A549 (cell line): ENCODE measurements at regions of chr9 and their contacts with region 1.

Region 1: DNA sequence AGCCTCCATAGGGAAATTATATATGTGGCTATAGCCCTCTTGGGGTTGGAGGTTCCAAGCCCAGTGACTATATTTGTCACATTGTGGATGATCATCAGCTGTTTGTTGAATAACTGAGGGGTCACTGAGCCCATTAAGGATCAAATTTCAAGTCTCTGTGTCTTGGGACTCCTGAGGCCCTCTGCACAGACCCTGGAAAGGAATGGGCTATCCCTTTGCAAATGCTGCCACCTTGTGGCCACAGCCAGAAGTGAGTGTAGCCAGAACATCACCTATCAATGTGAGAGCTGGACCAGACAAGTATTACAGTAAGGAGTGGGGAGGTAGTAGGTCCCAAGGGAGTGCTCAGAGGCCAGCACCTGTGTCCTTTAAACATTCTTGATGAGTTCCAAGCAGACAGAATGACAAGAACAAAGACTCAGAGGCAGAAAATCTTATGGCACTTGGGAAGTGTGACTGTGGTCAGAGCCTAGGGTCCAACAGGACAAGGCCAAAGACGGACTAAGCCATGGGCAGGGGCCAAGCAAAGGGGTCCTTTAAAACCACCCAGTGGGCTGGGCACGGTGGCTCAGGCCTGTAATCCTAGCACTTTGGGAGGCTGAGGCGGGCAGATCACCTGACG is 8.2 kb downstream of the RPP25L start:
- DNase-seq: peak; percentile 71 to 94
- ATAC-seq: peak; percentile 82 to 96
- H3K4me3 ChIP-seq: no peak overlapping the region
- H3K27ac ChIP-seq: no peak overlapping the region
- H3K4me1 ChIP-seq: peaks cover 5% of the 10 kb centered on the region; the same call in 1 of the 3 replicates
- CTCF ChIP-seq: peak; percentile 95
- EP300 ChIP-seq: no peak
- POLR2A ChIP-seq: no peak
- RAD21 ChIP-seq: peak; percentile 88 to 96

Region 2: DNA sequence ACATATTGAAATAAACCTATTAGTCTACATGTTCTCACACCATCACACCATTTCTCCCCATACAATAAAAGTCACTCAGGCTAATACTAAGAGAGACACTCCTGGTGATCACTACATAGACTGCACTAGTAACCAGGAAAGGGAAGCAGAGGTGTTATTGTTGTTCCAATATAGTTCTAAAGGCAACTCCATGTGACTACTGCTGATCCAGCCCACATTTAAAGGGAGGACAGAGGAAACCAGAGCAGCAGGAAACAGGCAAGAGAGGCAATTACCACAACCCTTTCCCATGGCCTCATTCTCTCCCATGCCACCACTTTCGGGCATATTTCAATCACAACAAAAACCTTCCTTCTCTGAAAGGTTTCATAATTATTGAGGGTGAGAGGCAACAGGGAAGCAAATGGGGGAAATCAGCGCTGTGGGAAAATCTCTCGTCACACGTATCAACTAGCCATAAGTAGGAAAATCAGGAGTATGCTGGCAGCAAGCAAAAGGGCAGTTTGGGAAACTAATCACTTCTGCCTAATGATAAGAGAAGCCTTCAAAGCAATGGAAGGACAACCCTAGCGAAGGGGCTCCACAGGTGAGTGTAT is 556.8 kb before region 1 on chr9:
- CTCF ChIA-PET with region 1: no interaction called
- POLR2A ChIA-PET with region 1: no interaction called
- DNase-seq: no peak
- ATAC-seq: no peak
- H3K4me3 ChIP-seq: peak overlapping the region; percentile 76; the same call in 2 of the 3 replicates
- H3K27ac ChIP-seq: peak overlapping the region in 1 of 2 experiments; percentile 97; a peak in 2 of 6 replicates
- H3K4me1 ChIP-seq: peaks cover 29% of the 10 kb centered on the region
- CTCF ChIP-seq: no peak
- EP300 ChIP-seq: no peak
- POLR2A ChIP-seq: no peak
- RAD21 ChIP-seq: no peak

Region 3: GRCh38 chr9:34328987-34329832 is 274.5 kb before region 1 on chr9 and contains the starts of genes KIF24 and NUDT2:
- CTCF ChIA-PET with region 1: interaction called, 15 read pairs
- POLR2A ChIA-PET with region 1: no interaction called
- DNase-seq: peak; percentile 96 to 100
- ATAC-seq: peak; percentile 94 to 97
- H3K4me3 ChIP-seq: peak within 1 kb of the TSS; percentile 97
- H3K27ac ChIP-seq: peak within 1 kb of the TSS; percentile 92 to 95
- H3K4me1 ChIP-seq: peaks cover 20% of the 10 kb centered on the region
- CTCF ChIP-seq: no peak
- EP300 ChIP-seq: no peak
- POLR2A ChIP-seq: peak; percentile 77
- RAD21 ChIP-seq: no peak
- polyA plus RNA-seq, gene KIF24: 4.3 and 4.4 TPM in 2 replicates
- polyA plus RNA-seq, gene NUDT2: 26.4 and 26.8 TPM in 2 replicates

Region 4: GRCh38 chr9:34430843-34431437 is 172.8 kb before region 1 on chr9:
- CTCF ChIA-PET with region 1: interaction called, 152 read pairs
- POLR2A ChIA-PET with region 1: no interaction called
- DNase-seq: peak; percentile 8 to 49
- ATAC-seq: peak; percentile 63 to 68; a peak in 5 of 6 replicates
- H3K4me3 ChIP-seq: no peak overlapping the region
- H3K27ac ChIP-seq: no peak overlapping the region
- H3K4me1 ChIP-seq: no peaks in the 10 kb centered on the region
- CTCF ChIP-seq: no peak
- EP300 ChIP-seq: no peak
- POLR2A ChIP-seq: no peak
- RAD21 ChIP-seq: no peak

Region 5: GRCh38 chr9:34522971-34523797 is 80.5 kb before region 1 on chr9 and contains the start of gene ENHO:
- CTCF ChIA-PET with region 1: interaction called, 12 read pairs
- POLR2A ChIA-PET with region 1: no interaction called
- DNase-seq: peak; percentile 83 to 94
- ATAC-seq: peak; percentile 92 to 99
- H3K4me3 ChIP-seq: peak within 1 kb of the TSS; percentile 58
- H3K27ac ChIP-seq: peak within 1 kb of the TSS; percentile 70 to 85
- H3K4me1 ChIP-seq: peaks cover 8% of the 10 kb centered on the region; the same call in 2 of the 3 replicates
- CTCF ChIP-seq: no peak
- EP300 ChIP-seq: no peak
- POLR2A ChIP-seq: peak; percentile 20; the same call in 1 of the 2 replicates
- RAD21 ChIP-seq: no peak
- polyA plus RNA-seq, gene ENHO: 0.28 and 0.32 TPM in 2 replicates

Region 6: GRCh38 chr9:34559624-34560452 is 43.9 kb before region 1 on chr9:
- CTCF ChIA-PET with region 1: interaction called, 13 read pairs
- POLR2A ChIA-PET with region 1: no interaction called
- DNase-seq: peak; percentile 27 to 50
- ATAC-seq: peak; percentile 63 to 80; a peak in 5 of 6 replicates
- H3K4me3 ChIP-seq: no peak overlapping the region
- H3K27ac ChIP-seq: peak overlapping the region; percentile 45 to 48; a peak in 4 of 6 replicates
- H3K4me1 ChIP-seq: peaks cover 11% of the 10 kb centered on the region
- CTCF ChIP-seq: no peak
- EP300 ChIP-seq: no peak
- POLR2A ChIP-seq: no peak
- RAD21 ChIP-seq: no peak

Region 7: DNA sequence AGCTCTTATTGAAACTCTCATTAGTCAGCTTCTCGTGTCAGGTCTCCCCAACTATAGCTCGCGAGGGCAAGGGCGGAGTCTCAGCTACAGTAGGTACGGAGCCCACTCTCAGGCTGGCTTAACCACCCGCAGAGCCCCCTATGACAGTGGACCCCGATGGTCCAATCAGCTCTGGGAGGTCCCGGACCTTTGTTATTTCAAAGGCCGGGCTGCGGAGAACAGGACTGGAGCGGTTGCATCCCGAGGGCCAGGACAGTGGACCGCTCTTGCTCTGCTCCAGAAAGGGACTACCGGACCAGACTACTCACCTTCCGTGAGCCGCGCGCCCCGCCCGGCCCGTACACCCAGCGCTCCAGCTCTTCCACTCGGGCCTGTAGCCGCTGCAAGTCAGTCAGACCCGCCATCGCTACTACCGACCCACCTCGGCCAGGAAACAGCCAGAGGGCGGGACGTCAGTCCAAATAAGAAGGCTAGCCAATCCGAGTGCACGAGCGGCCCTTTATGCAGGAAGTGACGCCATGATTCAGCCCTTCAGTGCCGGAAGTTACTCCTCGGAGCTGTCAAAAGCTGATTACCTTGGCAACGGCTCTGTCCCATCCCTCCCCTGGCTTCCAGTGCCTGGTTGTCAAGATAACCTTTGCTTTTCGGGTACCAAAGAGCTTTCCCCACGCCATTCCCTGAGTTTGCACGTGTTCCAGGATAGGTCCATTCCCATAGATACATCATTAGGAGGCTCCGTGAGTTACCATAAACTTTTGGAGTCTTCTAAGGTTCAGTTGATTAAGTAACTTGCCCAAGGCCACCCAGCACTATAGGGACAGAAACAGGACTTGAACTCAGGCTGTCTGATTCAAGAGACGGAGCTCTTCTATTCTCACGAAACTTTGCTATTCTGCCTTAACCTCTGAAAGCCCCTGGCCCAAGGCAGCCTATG is 16.6 kb after region 1 on chr9 and contains the start of gene DCTN3:
- CTCF ChIA-PET with region 1: interaction called, 50 read pairs
- POLR2A ChIA-PET with region 1: interaction called, 6 read pairs
- DNase-seq: peak; percentile 93 to 97
- ATAC-seq: peak; percentile 96 to 99
- H3K4me3 ChIP-seq: peak within 1 kb of the TSS; percentile 81
- H3K27ac ChIP-seq: peak within 1 kb of the TSS; percentile 63 to 80
- H3K4me1 ChIP-seq: peaks cover 6% of the 10 kb centered on the region; the same call in 2 of the 3 replicates
- CTCF ChIP-seq: no peak
- EP300 ChIP-seq: no peak
- POLR2A ChIP-seq: peak; percentile 30; the same call in 1 of the 2 replicates
- RAD21 ChIP-seq: no peak
- polyA plus RNA-seq, gene DCTN3: 64.8 and 74.3 TPM in 2 replicates